PC-9 (cell line): ENCODE measurements at regions of chr10 and their contacts with region 1.

Region 1: GRCh38 chr10:68732651-68733050 is 11.6 kb downstream of the CCAR1 start:
- DNase-seq: no peak
- H3K4me3 ChIP-seq: no peak overlapping the region
- H3K27ac ChIP-seq: no peak overlapping the region
- H3K4me1 ChIP-seq: no peaks in the 10 kb centered on the region
- H3K27me3 ChIP-seq: no peaks in the 10 kb centered on the region
- CTCF ChIP-seq: no peak

Region 2: DNA sequence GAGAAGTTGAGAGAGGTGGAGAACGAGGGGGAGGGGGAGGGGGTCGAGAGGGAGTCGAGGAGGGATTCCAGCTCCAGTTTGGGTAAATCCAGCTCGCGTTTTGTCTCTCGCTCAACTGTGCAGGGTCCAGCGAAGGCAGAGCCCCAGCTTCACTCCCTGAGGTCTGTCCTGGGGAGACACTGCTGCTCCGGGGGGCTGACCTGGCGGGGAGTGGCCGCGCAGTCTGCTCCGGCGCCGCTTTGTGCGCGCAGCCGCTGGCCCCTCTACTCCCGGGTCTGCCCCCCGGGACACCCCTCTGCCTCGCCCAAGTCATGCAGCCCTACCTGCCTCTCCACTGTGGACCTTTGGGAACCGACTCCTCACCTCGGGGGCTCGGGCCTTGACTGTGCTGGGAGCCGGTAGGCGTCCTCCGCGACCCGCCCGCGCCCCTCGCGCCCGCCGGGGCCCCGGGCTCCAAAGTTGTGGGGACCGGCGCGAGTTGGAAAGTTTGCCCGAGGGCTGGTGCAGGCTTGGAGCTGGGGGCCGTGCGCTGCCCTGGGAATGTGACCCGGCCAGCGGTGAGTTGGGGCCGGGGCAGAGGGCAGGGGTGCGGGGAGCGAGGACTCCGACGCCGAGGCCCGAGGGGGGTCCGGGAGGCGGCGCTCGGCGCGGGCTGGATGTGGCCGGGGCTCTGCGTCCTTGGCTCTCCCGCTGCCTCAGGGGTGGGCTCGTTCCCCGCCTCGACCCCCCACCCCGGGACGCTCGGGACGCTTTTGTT is 172.3 kb before region 1 on chr10 and contains the start of gene TET1:
- CTCF ChIA-PET with region 1: no interaction called
- POLR2A ChIA-PET with region 1: no interaction called
- intact Hi-C with region 1: no loop called
- DNase-seq: peak in 1 of 2 experiments; percentile 41
- H3K4me3 ChIP-seq: peak within 1 kb of the TSS; percentile 68
- H3K27ac ChIP-seq: no peak within 1 kb of the TSS
- H3K4me1 ChIP-seq: no peaks in the 10 kb centered on the region
- H3K27me3 ChIP-seq: peaks cover 15% of the 10 kb centered on the region; the same call in 1 of the 2 replicates
- CTCF ChIP-seq: no peak
- total RNA-seq, gene TET1: 1.9 and 2.4 TPM in 2 replicates

Region 3: DNA sequence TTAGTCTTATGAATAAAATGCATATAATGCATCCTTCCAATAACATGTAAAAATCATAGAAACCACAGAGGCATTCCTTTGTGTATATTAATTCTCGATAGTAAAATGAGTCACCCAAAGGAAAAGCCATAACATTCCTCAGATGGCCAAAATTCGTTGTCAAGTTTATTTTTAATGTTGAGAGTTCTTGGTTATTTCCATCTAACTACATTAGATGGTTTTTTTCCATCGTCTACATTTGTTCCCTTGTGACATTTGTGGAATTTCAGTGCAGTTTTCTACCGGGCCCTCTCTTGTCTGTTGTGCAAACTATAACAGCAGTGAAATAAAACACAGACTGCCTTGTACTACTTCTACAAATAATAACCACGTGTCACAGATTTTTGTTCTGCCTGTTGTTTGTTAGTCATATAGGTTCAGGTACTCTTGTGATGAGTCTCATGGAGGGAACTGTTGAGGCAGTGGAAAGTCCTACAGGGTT is 66.3 kb before region 1 on chr10:
- CTCF ChIA-PET with region 1: no interaction called
- POLR2A ChIA-PET with region 1: no interaction called
- intact Hi-C with region 1: loop called (anchors 2 kb)
- DNase-seq: peak in 1 of 2 experiments; percentile 62
- H3K4me3 ChIP-seq: no peak overlapping the region
- H3K27ac ChIP-seq: 0 out of 2 replicates have a peak overlapping the region, but pooled peaks have one; percentile 2
- H3K4me1 ChIP-seq: no peaks in the 10 kb centered on the region
- H3K27me3 ChIP-seq: no peaks in the 10 kb centered on the region
- CTCF ChIP-seq: no peak